ENCODE measurements at regions of chr7 and their contacts with region 1.

Region 1: GRCh38 chr7:36192053-36192824 is 39.2 kb downstream of the EEPD1 start:
- H3K4me3 Mint-ChIP-seq: no peak overlapping the region
- H3K27ac Mint-ChIP-seq: peak overlapping the region; percentile 81
- H3K4me1 Mint-ChIP-seq: peaks cover 72% of the 10 kb centered on the region
- H3K27me3 Mint-ChIP-seq: peaks cover 3% of the 10 kb centered on the region

Region 2: DNA sequence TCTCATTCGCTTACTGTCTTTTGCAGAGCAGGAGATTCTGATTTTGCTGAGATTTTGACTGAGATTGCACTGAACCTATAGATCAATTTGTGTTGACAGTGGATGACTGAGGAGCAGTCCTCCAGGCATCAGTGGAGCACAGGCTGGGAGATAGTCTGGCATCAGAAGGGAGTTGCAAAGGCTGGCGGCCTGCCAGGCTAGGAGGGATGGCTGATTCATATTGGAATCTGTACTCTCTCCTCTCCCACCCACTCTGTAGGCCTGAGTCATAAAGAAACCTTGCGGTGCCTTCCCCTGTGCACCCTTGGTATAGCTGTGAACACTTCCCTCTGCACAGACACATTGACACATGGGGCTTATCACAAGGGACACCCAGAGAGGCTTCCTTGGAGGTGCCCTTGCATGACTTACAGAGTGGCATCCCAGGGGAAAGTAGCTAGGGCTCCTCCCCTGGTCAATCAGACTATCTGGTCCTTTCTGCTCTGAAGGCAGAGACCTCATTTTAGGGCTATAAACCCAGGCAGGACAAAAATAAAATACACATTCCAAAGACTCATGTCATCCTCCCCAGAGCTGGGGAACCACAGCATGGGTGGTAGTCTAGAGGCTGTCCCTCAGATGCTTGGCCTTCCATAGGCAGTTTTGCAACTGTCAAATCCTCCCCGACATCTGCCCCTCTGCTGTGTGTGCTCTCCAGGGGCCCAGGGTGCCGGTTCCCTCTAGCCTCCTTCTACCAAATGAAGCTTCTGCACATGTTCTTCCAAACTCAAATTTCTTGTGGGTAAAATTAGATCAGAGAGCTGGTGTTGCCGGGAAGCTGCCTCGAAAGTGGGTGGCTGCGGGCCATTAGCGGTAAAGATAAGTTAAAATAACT is 76.6 kb before region 1 on chr7:
- intact Hi-C with region 1: loop called (anchors 1 kb)
- H3K4me3 Mint-ChIP-seq: no peak overlapping the region
- H3K27ac Mint-ChIP-seq: peak overlapping the region; percentile 42
- H3K4me1 Mint-ChIP-seq: peaks cover 58% of the 10 kb centered on the region
- H3K27me3 Mint-ChIP-seq: peaks cover 10% of the 10 kb centered on the region

Region 3: GRCh38 chr7:36152756-36153570 is 39.3 kb before region 1 on chr7 and contains the start of gene EEPD1:
- intact Hi-C with region 1: loop called (anchors 2 kb)
- H3K4me3 Mint-ChIP-seq: peak within 1 kb of the TSS; percentile 88
- H3K27ac Mint-ChIP-seq: peak within 1 kb of the TSS; percentile 89
- H3K4me1 Mint-ChIP-seq: peaks cover 71% of the 10 kb centered on the region
- H3K27me3 Mint-ChIP-seq: no peaks in the 10 kb centered on the region

Region 4: GRCh38 chr7:36207451-36208291 is 15.4 kb after region 1 on chr7:
- intact Hi-C with region 1: loop called (anchors 1 kb)
- H3K4me3 Mint-ChIP-seq: no peak overlapping the region
- H3K27ac Mint-ChIP-seq: peak overlapping the region; percentile 90
- H3K4me1 Mint-ChIP-seq: peaks cover 81% of the 10 kb centered on the region
- H3K27me3 Mint-ChIP-seq: no peaks in the 10 kb centered on the region

Region 5: GRCh38 chr7:36232971-36233550 is 40.8 kb after region 1 on chr7:
- intact Hi-C with region 1: no loop called
- H3K4me3 Mint-ChIP-seq: no peak overlapping the region
- H3K27ac Mint-ChIP-seq: no peak overlapping the region
- H3K4me1 Mint-ChIP-seq: peaks cover 35% of the 10 kb centered on the region
- H3K27me3 Mint-ChIP-seq: no peaks in the 10 kb centered on the region

Region 6: GRCh38 chr7:36264123-36264801 is 72.0 kb after region 1 on chr7:
- intact Hi-C with region 1: loop called (anchors 2 kb)
- H3K4me3 Mint-ChIP-seq: no peak overlapping the region
- H3K27ac Mint-ChIP-seq: peak overlapping the region; percentile 85
- H3K4me1 Mint-ChIP-seq: peaks cover 68% of the 10 kb centered on the region
- H3K27me3 Mint-ChIP-seq: no peaks in the 10 kb centered on the region